Caco-2 (cell line): ENCODE measurements at regions of chr6 and their contacts with region 1.

Region 1: GRCh38 chr6:165042912-165043311 is 266.5 kb downstream of the C6orf118 start:
- DNase-seq: peak; percentile 43 to 49
- H3K4me3 ChIP-seq: no peak overlapping the region
- H3K4me3 Mint-ChIP-seq: no peak overlapping the region
- H3K27ac Mint-ChIP-seq: no peak overlapping the region
- H3K4me1 ChIP-seq: no peaks in the 10 kb centered on the region
- H3K4me1 Mint-ChIP-seq: no peaks in the 10 kb centered on the region
- H3K27me3 ChIP-seq: no peaks in the 10 kb centered on the region
- H3K27me3 Mint-ChIP-seq: no peaks in the 10 kb centered on the region
- CTCF ChIP-seq: no peak

Region 2: DNA sequence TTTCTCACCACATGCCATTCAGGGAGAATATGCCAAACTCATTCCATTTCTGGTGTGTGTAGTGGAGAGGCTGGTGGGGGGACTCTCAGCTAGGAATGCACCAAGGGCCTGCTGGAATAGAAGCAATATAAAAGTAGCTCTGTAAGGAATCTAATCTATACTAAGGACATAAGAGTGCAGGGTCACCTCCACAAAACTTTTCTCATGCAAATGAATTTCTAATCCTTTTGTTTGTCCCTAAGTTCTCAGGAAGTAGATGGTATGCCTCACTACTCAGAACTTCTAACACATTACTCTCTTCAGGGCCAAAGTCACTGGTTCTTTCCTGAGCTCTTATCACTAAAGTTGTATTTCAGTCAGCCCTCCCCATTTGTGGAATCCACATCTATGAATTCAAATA is 160.7 kb before region 1 on chr6:
- CTCF ChIA-PET with region 1: no interaction called
- POLR2A ChIA-PET with region 1: no interaction called
- intact Hi-C with region 1: no loop called
- DNase-seq: no peak
- H3K4me3 ChIP-seq: no peak overlapping the region
- H3K4me3 Mint-ChIP-seq: no peak overlapping the region
- H3K27ac Mint-ChIP-seq: no peak overlapping the region
- H3K4me1 ChIP-seq: no peaks in the 10 kb centered on the region
- H3K4me1 Mint-ChIP-seq: no peaks in the 10 kb centered on the region
- H3K27me3 ChIP-seq: no peaks in the 10 kb centered on the region
- H3K27me3 Mint-ChIP-seq: no peaks in the 10 kb centered on the region
- CTCF ChIP-seq: no peak

Region 3: DNA sequence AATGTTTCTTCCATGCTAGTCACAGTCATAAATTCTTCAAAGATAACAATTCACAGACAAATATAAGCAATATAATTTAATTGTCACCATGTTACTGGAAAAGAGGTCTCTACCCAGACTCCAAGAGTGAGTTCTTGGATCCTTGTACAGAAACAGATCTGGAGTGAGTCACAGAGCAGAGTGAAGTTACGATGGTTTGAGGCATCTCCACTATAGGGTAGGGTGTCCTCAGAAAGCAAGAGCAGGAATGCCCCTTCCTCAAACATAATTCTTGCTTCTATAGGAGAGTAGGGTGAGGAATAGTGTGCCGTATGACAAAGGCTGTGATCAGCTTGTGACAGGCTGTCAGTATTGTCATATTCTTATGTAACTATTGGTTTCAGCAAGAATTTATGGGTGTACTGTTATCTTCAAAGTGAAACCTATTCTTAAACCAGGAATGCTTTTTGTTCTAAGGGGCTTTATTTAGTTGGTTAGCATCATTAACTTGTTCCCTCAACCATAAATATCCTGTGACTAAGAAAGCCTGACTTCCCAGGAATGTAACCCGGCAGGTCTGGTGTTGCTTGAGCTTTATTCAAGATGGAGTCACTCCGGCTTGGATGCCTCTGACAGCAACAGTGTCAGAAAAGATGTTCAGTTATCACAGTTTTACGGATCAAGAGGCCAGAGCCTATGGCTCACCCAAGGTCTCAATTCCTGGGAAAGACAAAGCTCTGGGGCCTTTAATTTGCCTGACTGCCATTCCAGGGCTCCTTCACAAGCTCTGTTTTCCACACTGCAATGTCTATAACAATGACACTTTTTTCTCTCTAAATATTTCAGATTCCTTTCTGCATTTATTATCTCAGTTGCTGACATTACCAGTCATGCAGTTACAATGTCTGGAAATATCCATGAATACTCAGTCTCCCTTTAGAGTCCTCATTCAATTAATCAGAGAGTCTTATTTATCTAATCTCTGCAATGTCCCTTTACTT is 32.1 kb before region 1 on chr6:
- CTCF ChIA-PET with region 1: no interaction called
- POLR2A ChIA-PET with region 1: no interaction called
- intact Hi-C with region 1: loop called (anchors 2 kb)
- DNase-seq: peak; percentile 71 to 77
- H3K4me3 ChIP-seq: no peak overlapping the region
- H3K4me3 Mint-ChIP-seq: peak overlapping the region; percentile 62
- H3K27ac Mint-ChIP-seq: peak overlapping the region; percentile 92
- H3K4me1 ChIP-seq: peaks cover 27% of the 10 kb centered on the region
- H3K4me1 Mint-ChIP-seq: peaks cover 28% of the 10 kb centered on the region
- H3K27me3 ChIP-seq: no peaks in the 10 kb centered on the region
- H3K27me3 Mint-ChIP-seq: no peaks in the 10 kb centered on the region
- CTCF ChIP-seq: no peak